A673 (cell line): ENCODE measurements at regions of chr5 and their contacts with region 1.

Region 1: DNA sequence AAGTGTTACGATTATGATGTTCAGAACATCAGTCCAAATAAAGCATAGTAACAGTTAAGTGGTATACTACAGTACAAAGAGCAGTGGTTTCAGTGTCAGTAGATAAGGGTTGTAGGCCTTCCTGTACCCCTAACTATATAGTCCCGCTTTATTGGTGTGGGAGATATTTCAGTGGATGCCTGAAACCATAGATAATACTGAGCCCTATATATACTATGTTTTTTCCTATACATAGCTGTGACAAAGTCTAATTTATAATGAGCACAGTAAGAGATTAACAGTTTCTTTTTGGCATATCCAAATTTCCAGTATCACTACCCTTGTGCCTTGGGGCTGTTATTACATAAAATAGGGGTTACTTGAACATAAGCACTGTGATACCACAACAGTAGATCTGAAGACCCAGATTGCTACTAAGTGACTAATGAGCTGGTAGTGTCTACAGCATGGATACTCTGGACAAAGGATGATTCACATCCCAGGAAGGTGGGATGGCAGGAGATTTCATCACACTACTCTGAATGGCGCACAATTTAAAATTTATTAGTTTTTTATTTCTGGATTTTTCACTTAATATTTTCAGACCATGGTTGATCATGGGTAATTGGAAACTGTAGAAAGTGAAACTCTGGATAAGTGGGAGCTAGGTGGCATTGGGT is 119.3 kb downstream of the RPS23 start:
- DNase-seq: no peak
- H3K4me3 ChIP-seq: no peak overlapping the region
- H3K27ac ChIP-seq: no peak overlapping the region
- H3K4me1 ChIP-seq: peaks cover 32% of the 10 kb centered on the region
- H3K27me3 ChIP-seq: no peaks in the 10 kb centered on the region
- CTCF ChIP-seq: no peak

Region 2: GRCh38 chr5:81825237-81825636 is 333.6 kb before region 1 on chr5:
- CTCF ChIA-PET with region 1: no interaction called
- POLR2A ChIA-PET with region 1: no interaction called
- intact Hi-C with region 1: no loop called
- DNase-seq: peak; percentile 23
- H3K4me3 ChIP-seq: no peak overlapping the region
- H3K27ac ChIP-seq: no peak overlapping the region
- H3K4me1 ChIP-seq: no peaks in the 10 kb centered on the region
- H3K27me3 ChIP-seq: no peaks in the 10 kb centered on the region
- CTCF ChIP-seq: no peak

Region 3: DNA sequence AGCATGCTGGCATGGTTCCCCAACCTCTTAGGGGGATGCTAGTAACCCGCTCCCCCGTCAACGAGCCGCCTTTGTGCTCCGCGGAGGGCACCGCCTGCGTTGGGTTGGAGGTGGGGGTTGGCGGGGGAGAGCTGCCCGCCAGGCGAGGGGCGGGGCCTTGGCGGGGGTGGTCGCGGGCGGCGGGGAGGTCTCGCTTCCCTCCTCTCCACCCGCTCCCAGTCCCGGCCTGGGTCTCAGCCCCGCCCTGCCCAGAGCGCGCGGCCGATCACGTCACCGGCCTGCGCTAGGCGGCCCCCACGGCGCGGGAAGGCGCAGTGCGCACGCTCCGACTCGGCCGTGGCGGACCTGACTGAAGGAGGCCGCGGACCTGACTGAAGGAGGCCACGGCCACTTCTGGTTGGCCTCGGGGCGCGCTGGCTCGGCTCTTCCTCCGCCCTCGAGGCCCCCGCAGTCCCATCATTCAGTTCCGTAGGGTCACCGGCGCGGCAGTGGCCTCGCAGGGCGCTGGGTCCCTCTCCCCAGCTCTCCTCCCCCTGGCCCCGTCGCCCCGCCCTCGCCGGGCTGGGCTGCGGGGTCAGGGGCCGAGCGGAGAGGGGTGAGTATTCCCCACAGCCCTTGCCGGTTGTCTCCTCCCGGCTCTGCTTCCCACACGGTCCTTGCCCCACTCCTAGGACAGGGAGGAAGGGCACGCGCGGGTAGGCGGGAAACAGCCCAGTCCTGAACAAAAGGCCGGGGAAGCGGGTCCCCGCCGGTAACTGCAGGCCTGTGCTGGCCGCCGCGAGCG is 187.0 kb before region 1 on chr5 and contains the start of gene ATG10:
- CTCF ChIA-PET with region 1: no interaction called
- POLR2A ChIA-PET with region 1: no interaction called
- intact Hi-C with region 1: loop called (anchors 5 kb)
- DNase-seq: peak; percentile 96
- H3K4me3 ChIP-seq: peak within 1 kb of the TSS; percentile 81
- H3K27ac ChIP-seq: peak within 1 kb of the TSS; percentile 99
- H3K4me1 ChIP-seq: peaks cover 10% of the 10 kb centered on the region
- H3K27me3 ChIP-seq: no peaks in the 10 kb centered on the region
- CTCF ChIP-seq: no peak
- total RNA-seq, gene ATG10: 17.1 and 18.1 TPM in 2 replicates

Region 4: DNA sequence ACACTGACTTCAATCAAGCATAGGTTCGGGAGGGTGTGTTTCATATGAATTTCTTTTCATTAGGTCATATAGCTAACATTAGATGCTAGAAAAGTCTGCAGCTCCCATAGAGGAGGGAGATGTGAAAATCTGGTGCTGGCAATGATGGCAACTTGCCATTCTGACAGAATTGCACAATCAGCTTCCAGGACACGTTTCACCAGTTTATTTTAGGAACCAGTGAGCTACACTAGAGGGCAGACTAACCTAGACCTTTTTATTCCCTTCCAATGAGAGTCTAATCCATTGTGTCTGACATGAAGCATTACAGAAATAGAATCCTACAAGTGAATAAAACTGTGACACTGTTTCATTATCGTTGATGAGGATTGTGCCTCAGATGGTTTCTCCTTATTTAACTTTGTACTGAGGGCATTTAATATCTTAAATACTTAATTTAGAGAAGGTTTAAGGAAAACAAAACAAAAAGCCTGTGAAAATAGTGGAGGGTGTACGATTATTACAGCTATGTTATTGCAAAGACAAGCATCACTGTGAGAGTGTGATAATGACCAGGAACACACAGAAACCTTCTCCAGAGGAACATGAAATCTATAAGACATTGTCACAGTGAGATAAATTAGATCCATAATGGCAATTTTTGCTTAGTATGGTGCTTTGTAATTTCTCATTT is 482.6 kb after region 1 on chr5:
- CTCF ChIA-PET with region 1: no interaction called
- POLR2A ChIA-PET with region 1: no interaction called
- intact Hi-C with region 1: no loop called
- DNase-seq: peak; percentile 91
- H3K4me3 ChIP-seq: no peak overlapping the region
- H3K27ac ChIP-seq: no peak overlapping the region
- H3K4me1 ChIP-seq: peaks cover 22% of the 10 kb centered on the region
- H3K27me3 ChIP-seq: no peaks in the 10 kb centered on the region
- CTCF ChIP-seq: peak; percentile 77

Region 5: GRCh38 chr5:83001796-83002381 is 843.0 kb after region 1 on chr5:
- CTCF ChIA-PET with region 1: no interaction called
- POLR2A ChIA-PET with region 1: no interaction called
- intact Hi-C with region 1: no loop called
- DNase-seq: no peak
- H3K4me3 ChIP-seq: no peak overlapping the region
- H3K27ac ChIP-seq: no peak overlapping the region
- H3K4me1 ChIP-seq: no peaks in the 10 kb centered on the region
- H3K27me3 ChIP-seq: no peaks in the 10 kb centered on the region
- CTCF ChIP-seq: no peak